Gastrocnemius medialis (tissue), 4 donors: ENCODE measurements at regions of chr1 and their contacts with region 1.

Region 1: GRCh38 chr1:33086384-33086850 is 5.5 kb downstream of the AZIN2 start:
- DNase-seq: peak; percentile 56 to 77
- ATAC-seq: peak; percentile 59 to 60
- H3K4me3 ChIP-seq: no peak overlapping the region
- H3K27ac ChIP-seq: no peak overlapping the region
- H3K4me1 ChIP-seq: peaks cover 11 to 19% of the 10 kb centered on the region in 2 donors
- H3K27me3 ChIP-seq: no peaks in the 10 kb centered on the region
- CTCF ChIP-seq: peak; percentile 50 to 83 (median 81)
- POLR2A ChIP-seq: no peak

Region 2: GRCh38 chr1:32666901-32667566 is 419.4 kb before region 1 on chr1:
- in situ Hi-C with region 1: no loop called
- intact Hi-C with region 1: no loop called
- DNase-seq: no peak
- ATAC-seq: no peak
- H3K4me3 ChIP-seq: no peak overlapping the region
- H3K27ac ChIP-seq: no peak overlapping the region
- H3K4me1 ChIP-seq: no peaks in the 10 kb centered on the region
- H3K27me3 ChIP-seq: no peaks in the 10 kb centered on the region
- CTCF ChIP-seq: no peak
- POLR2A ChIP-seq: no peak

Region 3: GRCh38 chr1:32817159-32817814 is 269.1 kb before region 1 on chr1 and contains the starts of genes S100PBP and YARS1:
- in situ Hi-C with region 1: no loop called
- intact Hi-C with region 1: loop called (anchors 5 kb)
- DNase-seq: peak; percentile 99
- ATAC-seq: peak; percentile 90 to 92
- H3K4me3 ChIP-seq: peak within 1 kb of the TSS; percentile 91 to 98 (median 93)
- H3K27ac ChIP-seq: peak within 1 kb of the TSS; percentile 95 to 99 (median 96)
- H3K4me1 ChIP-seq: peaks cover 45 to 47% of the 10 kb centered on the region in 2 donors
- H3K27me3 ChIP-seq: no peaks in the 10 kb centered on the region
- CTCF ChIP-seq: peak in 3 of 5 experiments; percentile 28 to 52 (median 39)
- POLR2A ChIP-seq: peak; percentile 97
- total RNA-seq, gene S100PBP: 4.9 to 11.5 (median 9.9) TPM
- total RNA-seq, gene YARS1: 37.8 to 59.4 (median 55.9) TPM

Region 4: GRCh38 chr1:32876341-32877210 is 209.8 kb before region 1 on chr1:
- in situ Hi-C with region 1: no loop called
- intact Hi-C with region 1: loop called (anchors 1 kb)
- DNase-seq: peak in 1 of 2 donors; percentile 45
- ATAC-seq: peak in 1 of 2 donors; percentile 63
- H3K4me3 ChIP-seq: no peak overlapping the region
- H3K27ac ChIP-seq: no peak overlapping the region
- H3K4me1 ChIP-seq: peaks cover 9 to 17% of the 10 kb centered on the region in 2 donors
- H3K27me3 ChIP-seq: no peaks in the 10 kb centered on the region
- CTCF ChIP-seq: peak; percentile 53 to 86 (median 81)
- POLR2A ChIP-seq: no peak

Region 5: DNA sequence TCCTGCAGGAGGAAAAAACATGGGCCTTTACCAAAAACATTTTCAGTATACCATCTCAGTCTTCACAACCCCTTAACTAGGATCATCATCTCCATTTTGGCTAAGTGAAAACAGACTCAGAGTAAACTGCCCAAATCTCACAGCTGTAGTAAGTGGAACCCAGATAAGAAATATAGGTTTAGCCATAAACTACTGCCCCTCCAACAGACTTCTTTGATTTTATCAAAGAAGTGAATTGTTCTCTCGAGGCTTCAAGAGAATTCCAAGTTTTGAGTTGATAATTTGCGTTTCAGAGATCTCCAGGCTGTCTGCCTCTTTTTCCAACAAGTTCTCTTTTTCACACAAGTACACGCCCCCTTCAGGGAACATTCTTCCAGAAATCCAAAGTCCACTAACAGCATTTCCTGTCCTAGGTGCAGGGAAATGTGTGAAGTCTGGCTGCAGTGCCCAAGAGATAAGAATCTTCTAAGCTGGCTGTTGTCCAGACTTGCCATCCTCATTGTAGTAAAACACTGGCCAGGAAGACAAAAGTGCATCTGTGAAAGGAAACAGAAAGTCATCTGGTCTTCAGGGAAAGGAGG is 152.6 kb before region 1 on chr1:
- in situ Hi-C with region 1: loop called in 2 of 4 experiments (anchors 5 to 10 kb)
- intact Hi-C with region 1: loop called (anchors 1 kb)
- DNase-seq: no peak
- ATAC-seq: peak in 1 of 2 donors; percentile 49
- H3K4me3 ChIP-seq: no peak overlapping the region
- H3K27ac ChIP-seq: peak overlapping the region in 3 of 4 donors; percentile 26 to 59 (median 41)
- H3K4me1 ChIP-seq: no peaks in the 10 kb centered on the region
- H3K27me3 ChIP-seq: no peaks in the 10 kb centered on the region
- CTCF ChIP-seq: peak in 1 of 5 experiments; percentile 12
- POLR2A ChIP-seq: no peak